Panc1 (cell line): ENCODE measurements at regions of chr10 and their contacts with region 1.

Region 1: GRCh38 chr10:43322769-43323168 is 48.7 kb upstream of the FXYD4 start:
- DNase-seq: no peak
- ATAC-seq: peak; percentile 86
- H3K4me3 ChIP-seq: peak overlapping the region in 1 of 2 experiments; percentile 26; a peak in 1 of 4 replicates
- H3K27ac ChIP-seq: no peak overlapping the region
- H3K4me1 ChIP-seq: no peaks in the 10 kb centered on the region
- H3K27me3 ChIP-seq: no peaks in the 10 kb centered on the region; the same call in 1 of the 2 replicates
- CTCF ChIP-seq: no peak

Region 2: GRCh38 chr10:42690449-42691360 is 632.1 kb before region 1 on chr10:
- CTCF ChIA-PET with region 1: no interaction called
- POLR2A ChIA-PET with region 1: no interaction called
- in situ Hi-C with region 1: no loop called
- intact Hi-C with region 1: no loop called
- DNase-seq: no peak
- ATAC-seq: peak; percentile 89
- H3K4me3 ChIP-seq: peak overlapping the region in 1 of 2 experiments; percentile 38; a peak in 1 of 4 replicates
- H3K27ac ChIP-seq: no peak overlapping the region
- H3K4me1 ChIP-seq: no peaks in the 10 kb centered on the region
- H3K27me3 ChIP-seq: no peaks in the 10 kb centered on the region; the same call in 1 of the 2 replicates
- CTCF ChIP-seq: peak; percentile 57

Region 3: GRCh38 chr10:43060291-43060690 is 262.5 kb before region 1 on chr10:
- CTCF ChIA-PET with region 1: no interaction called
- POLR2A ChIA-PET with region 1: interaction called, 17 read pairs
- in situ Hi-C with region 1: no loop called
- intact Hi-C with region 1: no loop called
- DNase-seq: no peak
- ATAC-seq: no peak
- H3K4me3 ChIP-seq: no peak overlapping the region
- H3K27ac ChIP-seq: no peak overlapping the region
- H3K4me1 ChIP-seq: peaks cover 35% of the 10 kb centered on the region
- H3K27me3 ChIP-seq: no peaks in the 10 kb centered on the region
- CTCF ChIP-seq: no peak

Region 4: GRCh38 chr10:43110338-43111086 is 212.3 kb before region 1 on chr10:
- CTCF ChIA-PET with region 1: no interaction called
- POLR2A ChIA-PET with region 1: no interaction called
- in situ Hi-C with region 1: no loop called
- intact Hi-C with region 1: no loop called
- DNase-seq: no peak
- ATAC-seq: peak; percentile 26; the same call in 1 of the 2 replicates
- H3K4me3 ChIP-seq: no peak overlapping the region
- H3K27ac ChIP-seq: no peak overlapping the region; the same call in 1 of the 2 replicates
- H3K4me1 ChIP-seq: peaks cover 18% of the 10 kb centered on the region
- H3K27me3 ChIP-seq: no peaks in the 10 kb centered on the region
- CTCF ChIP-seq: no peak

Region 5: GRCh38 chr10:43273543-43273942 is 49.2 kb before region 1 on chr10:
- CTCF ChIA-PET with region 1: no interaction called
- POLR2A ChIA-PET with region 1: no interaction called
- in situ Hi-C with region 1: no loop called
- intact Hi-C with region 1: no loop called
- DNase-seq: no peak
- ATAC-seq: no peak
- H3K4me3 ChIP-seq: no peak overlapping the region
- H3K27ac ChIP-seq: no peak overlapping the region
- H3K4me1 ChIP-seq: no peaks in the 10 kb centered on the region
- H3K27me3 ChIP-seq: no peaks in the 10 kb centered on the region; the same call in 1 of the 2 replicates
- CTCF ChIP-seq: no peak